PC-3 (cell line): ENCODE measurements at regions of chr5 and their contacts with region 1.

Region 1: DNA sequence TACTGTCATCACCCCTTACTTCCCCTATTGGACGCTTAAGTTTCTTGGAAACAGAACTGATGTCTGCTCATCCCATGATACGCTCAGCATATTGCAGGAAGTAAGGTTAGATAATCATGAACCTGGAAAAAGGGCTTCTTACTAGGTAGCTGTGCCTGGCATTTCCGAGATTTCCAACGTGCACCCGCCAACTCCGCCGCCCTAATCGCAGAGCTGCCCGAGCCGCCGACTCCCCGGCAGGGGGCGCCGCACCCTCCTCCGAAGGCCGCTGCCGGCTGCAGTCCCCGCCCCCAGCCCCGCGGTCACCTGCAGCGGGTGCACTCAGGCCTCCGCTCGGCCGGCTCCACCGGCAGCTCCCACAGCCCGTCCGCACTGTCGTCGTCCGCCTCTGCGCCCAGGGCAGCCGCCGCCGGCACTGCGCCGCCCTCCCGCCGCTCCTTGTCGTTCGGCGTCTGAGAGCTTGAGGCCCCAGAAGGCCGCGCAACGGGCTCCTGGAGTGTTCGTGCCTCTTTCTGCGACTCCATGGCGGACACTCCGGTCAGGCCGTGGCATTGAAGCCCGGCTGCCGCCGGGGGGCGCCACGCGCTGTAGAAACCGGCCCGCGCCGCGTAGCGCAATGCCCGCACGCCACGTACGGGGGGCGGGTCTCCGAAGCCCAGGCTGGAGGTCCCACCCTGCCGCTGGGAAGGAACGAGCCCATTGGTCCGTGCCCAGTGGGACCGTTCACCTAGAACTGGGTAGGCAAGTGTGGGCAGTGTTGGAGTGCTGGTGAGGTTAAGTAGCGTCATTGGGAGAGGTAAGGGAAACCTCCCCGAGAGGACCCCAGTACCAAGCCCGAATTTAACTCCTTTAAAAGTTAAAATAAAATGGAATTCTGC is at the start of gene DTWD2:
- DNase-seq: peak; percentile 94
- ATAC-seq: peak; percentile 96
- H3K4me3 ChIP-seq: peak within 1 kb of the TSS; percentile 82
- H3K27ac ChIP-seq: peak within 1 kb of the TSS; percentile 73
- H3K4me1 ChIP-seq: peaks cover 24% of the 10 kb centered on the region
- H3K27me3 ChIP-seq: no peaks in the 10 kb centered on the region
- CTCF ChIP-seq: peak; percentile 79
- total RNA-seq, gene DTWD2: 16.5 and 24.4 TPM in 2 replicates

Region 2: DNA sequence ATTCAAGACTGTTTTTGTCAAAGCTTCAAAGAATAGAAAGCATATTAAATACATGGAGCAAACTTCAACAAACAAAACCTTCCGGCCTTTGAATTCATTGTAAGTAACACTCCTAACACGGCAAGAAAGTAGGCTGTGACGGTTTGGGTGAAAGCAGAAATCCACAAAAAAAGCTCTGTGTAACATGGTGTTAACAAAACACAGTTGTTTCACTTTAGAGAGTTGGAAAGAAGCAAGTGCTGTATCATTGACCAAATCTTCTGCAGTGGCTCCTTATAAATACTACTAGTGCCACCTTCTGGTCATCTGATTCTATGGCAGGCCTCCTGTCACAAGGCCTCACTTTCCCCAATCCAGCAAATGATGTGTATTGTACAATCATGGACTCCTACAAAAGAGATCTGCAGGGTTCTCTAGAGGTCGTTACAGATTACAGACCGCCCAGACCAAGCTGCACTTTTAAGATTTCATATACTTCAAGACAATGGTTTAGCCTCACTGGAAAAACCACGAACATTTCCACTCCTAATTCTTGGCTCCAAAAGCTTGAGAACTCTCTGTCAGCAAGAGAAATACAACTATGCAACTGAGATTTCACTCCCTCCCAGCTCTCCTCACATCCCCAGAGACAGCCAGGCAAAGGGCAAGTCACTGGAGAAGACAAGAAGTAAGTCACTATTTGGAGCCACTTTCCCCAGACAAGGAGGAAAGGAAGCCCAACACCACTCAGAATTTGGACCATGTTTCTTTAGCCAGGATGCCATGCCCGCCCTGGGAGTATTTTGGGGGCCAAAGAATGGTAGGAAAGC is 196.1 kb before region 1 on chr5:
- CTCF ChIA-PET with region 1: no interaction called
- POLR2A ChIA-PET with region 1: no interaction called
- intact Hi-C with region 1: no loop called
- DNase-seq: peak; percentile 65
- ATAC-seq: peak; percentile 90
- H3K4me3 ChIP-seq: no peak overlapping the region; the same call in 1 of the 2 replicates
- H3K27ac ChIP-seq: no peak overlapping the region
- H3K4me1 ChIP-seq: no peaks in the 10 kb centered on the region
- H3K27me3 ChIP-seq: no peaks in the 10 kb centered on the region
- CTCF ChIP-seq: peak; percentile 72

Region 3: DNA sequence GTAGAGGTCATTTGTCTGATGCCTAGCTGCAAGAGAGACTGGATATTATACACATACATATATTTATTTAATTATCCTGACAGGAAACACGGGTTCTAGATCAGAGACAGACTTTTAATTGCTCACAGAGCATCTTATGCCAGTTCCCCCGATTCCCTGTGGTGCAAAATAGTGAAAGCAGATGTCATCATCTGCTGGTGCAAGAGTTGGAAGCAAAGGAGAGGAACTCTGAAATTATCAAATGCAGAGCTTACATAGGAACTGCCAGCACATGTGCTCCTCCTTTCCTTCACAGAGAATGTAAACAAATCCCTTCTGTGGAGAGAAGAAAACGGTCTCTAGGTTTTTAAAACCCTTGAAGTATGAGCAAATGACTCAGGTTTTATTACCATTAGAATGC is 69.2 kb before region 1 on chr5:
- CTCF ChIA-PET with region 1: no interaction called
- POLR2A ChIA-PET with region 1: no interaction called
- intact Hi-C with region 1: no loop called
- DNase-seq: no peak
- ATAC-seq: no peak
- H3K4me3 ChIP-seq: no peak overlapping the region
- H3K27ac ChIP-seq: no peak overlapping the region
- H3K4me1 ChIP-seq: no peaks in the 10 kb centered on the region
- H3K27me3 ChIP-seq: no peaks in the 10 kb centered on the region
- CTCF ChIP-seq: no peak

Region 4: DNA sequence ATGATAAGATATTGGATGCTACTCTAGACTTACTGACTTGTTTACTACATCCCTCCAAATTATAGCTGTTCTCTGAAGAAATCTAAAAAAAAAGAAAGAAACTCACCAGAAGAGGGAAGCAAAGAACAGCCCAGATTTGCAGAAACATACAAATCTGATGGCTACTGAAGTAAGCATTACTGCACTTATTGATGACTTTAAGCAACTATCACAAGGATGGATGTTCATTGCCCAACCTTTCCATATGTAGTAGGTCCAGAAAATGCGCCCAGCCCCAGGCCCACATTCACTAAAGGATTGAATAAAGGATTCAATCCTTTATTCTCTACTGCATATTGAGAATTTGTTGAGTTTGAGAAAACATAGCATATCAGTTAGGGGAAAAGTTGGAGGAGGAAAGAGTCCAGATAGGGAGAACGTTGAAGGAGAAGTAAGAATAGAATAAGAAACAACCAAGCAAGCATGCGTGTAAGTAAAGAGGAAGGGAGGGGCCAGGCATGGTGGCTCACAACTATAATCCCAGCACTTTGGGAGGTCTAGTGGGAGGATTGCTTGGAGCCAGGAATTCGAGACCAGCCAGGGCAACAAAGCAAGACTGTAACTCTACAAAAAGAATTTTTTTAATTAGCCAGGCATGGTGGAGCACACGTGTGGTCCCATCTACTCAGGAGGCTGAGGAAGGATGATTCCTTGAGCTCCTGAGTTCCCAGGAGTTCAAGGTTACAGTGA is 34.0 kb after region 1 on chr5:
- CTCF ChIA-PET with region 1: interaction called, 3 read pairs
- POLR2A ChIA-PET with region 1: no interaction called
- intact Hi-C with region 1: loop called (anchors 1 kb)
- DNase-seq: peak; percentile 50
- ATAC-seq: peak; percentile 25; the same call in 1 of the 2 replicates
- H3K4me3 ChIP-seq: no peak overlapping the region
- H3K27ac ChIP-seq: no peak overlapping the region
- H3K4me1 ChIP-seq: peaks cover 16% of the 10 kb centered on the region
- H3K27me3 ChIP-seq: no peaks in the 10 kb centered on the region
- CTCF ChIP-seq: peak; percentile 67

Region 5: DNA sequence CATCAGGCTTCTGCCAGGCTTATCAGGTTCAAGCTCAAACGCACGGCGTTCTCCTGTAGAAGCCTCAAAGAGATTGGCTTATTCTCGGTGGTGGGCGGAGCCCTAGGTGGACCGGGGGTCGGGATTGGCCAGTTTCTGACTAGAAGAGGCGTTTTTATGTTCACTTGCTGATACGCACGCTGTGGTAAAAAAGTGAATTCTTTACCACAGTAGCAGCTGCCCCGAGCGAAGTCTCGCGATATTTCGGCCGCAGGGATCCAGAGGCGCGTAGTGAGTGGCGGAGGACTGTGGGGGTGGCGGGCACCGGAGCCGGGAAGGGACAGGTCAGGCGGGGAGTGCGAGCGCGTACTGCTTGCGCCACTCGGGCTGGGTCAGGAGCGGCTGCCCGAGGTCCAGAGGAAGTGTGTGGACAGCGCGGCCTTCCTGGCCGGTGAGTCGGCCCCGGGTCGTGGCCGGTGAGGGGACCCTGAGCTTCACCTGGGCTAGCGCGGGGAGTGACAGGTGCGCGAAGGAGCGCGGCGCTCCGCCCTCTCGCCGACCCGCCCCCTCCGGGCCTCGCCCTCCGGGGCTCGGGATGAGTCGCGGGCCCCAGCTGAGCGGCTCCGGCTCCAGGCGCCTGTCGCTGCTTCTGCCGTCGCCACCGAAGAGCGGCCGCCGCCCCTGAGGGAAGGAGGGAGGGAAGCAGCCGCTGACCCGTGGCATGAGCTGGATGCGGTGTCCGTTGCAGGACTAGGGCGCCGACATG is 82.8 kb after region 1 on chr5 and contains the start of gene DMXL1:
- CTCF ChIA-PET with region 1: interaction called, 5 read pairs
- POLR2A ChIA-PET with region 1: no interaction called
- intact Hi-C with region 1: loop called (anchors 1 kb)
- DNase-seq: peak; percentile 97
- ATAC-seq: peak; percentile 88
- H3K4me3 ChIP-seq: peak within 1 kb of the TSS; percentile 98
- H3K27ac ChIP-seq: peak within 1 kb of the TSS; percentile 77
- H3K4me1 ChIP-seq: peaks cover 11% of the 10 kb centered on the region
- H3K27me3 ChIP-seq: no peaks in the 10 kb centered on the region
- CTCF ChIP-seq: no peak
- total RNA-seq, gene DMXL1: 16.0 and 20.6 TPM in 2 replicates

Region 6: GRCh38 chr5:119088438-119088837 is 100.2 kb after region 1 on chr5:
- CTCF ChIA-PET with region 1: no interaction called
- POLR2A ChIA-PET with region 1: no interaction called
- intact Hi-C with region 1: no loop called
- DNase-seq: no peak
- ATAC-seq: no peak
- H3K4me3 ChIP-seq: no peak overlapping the region
- H3K27ac ChIP-seq: no peak overlapping the region
- H3K4me1 ChIP-seq: no peaks in the 10 kb centered on the region
- H3K27me3 ChIP-seq: no peaks in the 10 kb centered on the region
- CTCF ChIP-seq: no peak

Region 7: DNA sequence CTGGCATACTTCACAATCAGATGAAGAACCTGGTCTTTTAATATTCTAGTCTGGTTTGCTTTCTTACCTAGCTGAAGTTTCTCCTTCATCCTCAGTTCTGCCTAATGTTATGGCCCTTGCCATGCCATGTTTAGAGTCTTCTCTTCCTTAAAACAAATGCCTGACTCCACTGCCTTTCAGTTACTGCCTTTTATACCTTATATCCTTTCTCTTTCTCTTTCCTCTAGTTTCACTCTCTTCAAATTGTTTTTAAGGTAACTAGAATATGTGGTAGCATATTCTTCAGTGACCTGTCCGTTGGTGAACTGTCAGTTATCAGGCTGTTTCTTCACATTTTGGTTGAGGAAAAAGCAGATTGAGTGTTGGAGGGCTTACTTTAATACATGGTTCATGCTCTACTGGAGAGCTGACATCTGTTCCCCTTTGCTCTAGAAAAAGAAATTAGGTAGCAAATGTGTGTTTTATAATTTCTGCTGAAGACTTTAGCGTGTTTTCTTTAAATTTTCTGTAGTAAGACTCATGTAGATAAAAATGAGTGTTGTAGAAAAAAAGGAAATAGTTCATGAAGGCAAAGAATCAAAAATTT is 186.4 kb after region 1 on chr5:
- CTCF ChIA-PET with region 1: no interaction called
- POLR2A ChIA-PET with region 1: no interaction called
- intact Hi-C with region 1: loop called (anchors 2 kb)
- DNase-seq: no peak
- ATAC-seq: no peak
- H3K4me3 ChIP-seq: no peak overlapping the region
- H3K27ac ChIP-seq: no peak overlapping the region
- H3K4me1 ChIP-seq: peaks cover 5% of the 10 kb centered on the region; the same call in 1 of the 2 replicates
- H3K27me3 ChIP-seq: no peaks in the 10 kb centered on the region
- CTCF ChIP-seq: no peak

Region 8: DNA sequence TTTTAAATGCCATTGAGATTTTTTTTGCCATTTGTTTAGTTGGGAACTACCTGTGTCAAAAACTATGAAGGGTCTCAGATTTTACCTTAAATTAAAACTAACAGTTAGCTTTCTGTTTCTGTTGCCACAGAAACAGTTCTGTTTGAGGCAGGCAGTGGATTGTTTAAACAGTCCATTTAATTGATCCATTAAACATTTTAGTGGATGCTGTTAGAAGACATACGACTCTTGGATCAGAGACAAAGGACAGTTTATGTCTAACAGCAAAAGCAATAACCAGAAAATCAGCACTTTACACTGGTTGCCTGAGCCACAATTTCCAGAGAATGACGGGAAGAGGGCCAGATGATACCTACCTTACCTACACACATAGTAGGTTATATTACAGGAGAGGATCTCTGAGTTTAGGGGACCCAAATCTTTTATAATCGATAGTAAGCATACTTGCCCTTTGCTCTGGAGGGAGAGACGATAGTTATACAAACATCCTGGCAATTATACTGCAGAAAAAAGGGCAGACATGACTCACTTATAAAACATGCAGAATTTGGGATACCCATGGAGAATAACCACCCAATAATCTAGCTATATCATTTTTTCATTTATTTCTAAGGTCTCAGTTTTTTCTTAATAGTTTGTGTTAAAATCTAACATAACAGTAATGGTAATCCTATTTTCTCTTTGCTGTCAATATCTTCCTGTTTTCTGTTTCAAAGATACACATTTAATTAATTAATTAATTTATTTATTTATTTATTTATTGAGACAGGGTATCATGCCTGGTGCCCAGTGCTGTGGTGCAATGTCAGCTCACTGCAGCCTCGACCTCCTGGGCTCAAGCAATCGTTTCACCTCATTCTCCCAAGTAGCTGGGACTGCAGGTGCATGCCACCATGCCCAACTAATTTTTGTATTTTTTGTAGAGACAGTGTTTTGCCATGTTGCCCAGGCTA is 230.9 kb after region 1 on chr5:
- CTCF ChIA-PET with region 1: no interaction called
- POLR2A ChIA-PET with region 1: no interaction called
- intact Hi-C with region 1: loop called (anchors 10 kb)
- DNase-seq: peak; percentile 56
- ATAC-seq: peak; percentile 88
- H3K4me3 ChIP-seq: 0 out of 2 replicates have a peak overlapping the region, but pooled peaks have one; percentile 2
- H3K27ac ChIP-seq: no peak overlapping the region
- H3K4me1 ChIP-seq: peaks cover 8% of the 10 kb centered on the region
- H3K27me3 ChIP-seq: no peaks in the 10 kb centered on the region
- CTCF ChIP-seq: no peak

Region 9: DNA sequence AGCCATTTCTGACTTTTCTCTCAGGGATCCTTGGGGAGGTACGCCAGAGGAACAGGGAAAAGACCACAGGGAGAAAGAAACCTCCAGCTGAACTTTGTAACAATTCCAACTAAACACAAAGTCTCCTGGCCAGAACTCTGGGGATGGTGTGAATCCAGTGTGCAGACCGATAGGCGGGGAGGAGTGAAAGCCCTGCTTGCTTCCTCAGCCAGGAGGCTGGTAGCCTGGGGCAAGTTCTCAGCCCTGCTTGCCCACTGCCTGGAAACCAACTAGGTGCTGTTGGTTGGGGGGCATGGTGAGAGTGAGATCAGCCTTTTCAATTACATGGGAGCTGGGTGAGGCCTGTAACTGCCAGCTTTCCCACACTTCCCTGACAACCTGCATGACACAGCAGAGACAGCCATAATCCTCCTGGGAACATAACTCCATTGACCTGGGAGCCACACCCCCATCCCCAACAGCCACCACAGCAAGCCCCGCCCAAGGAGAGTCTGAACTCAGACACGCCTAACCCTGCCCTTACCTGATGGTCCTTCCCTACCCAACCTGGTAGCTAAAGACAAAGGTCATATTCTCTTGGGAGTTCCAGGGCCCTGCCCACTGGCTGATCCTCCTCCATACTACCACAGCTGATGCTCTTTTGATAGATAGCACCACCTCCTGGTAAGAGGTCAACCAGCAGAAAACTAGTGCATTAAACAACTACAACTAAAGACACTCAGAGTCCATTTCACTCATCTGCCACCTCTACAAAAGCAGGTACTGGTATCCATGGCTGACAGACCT is 267.5 kb after region 1 on chr5:
- CTCF ChIA-PET with region 1: no interaction called
- POLR2A ChIA-PET with region 1: interaction called, 4 read pairs
- intact Hi-C with region 1: loop called (anchors 1 kb)
- DNase-seq: peak; percentile 58
- ATAC-seq: peak; percentile 93
- H3K4me3 ChIP-seq: no peak overlapping the region
- H3K27ac ChIP-seq: peak overlapping the region; percentile 59
- H3K4me1 ChIP-seq: no peaks in the 10 kb centered on the region
- H3K27me3 ChIP-seq: no peaks in the 10 kb centered on the region
- CTCF ChIP-seq: peak; percentile 57

Region 10: DNA sequence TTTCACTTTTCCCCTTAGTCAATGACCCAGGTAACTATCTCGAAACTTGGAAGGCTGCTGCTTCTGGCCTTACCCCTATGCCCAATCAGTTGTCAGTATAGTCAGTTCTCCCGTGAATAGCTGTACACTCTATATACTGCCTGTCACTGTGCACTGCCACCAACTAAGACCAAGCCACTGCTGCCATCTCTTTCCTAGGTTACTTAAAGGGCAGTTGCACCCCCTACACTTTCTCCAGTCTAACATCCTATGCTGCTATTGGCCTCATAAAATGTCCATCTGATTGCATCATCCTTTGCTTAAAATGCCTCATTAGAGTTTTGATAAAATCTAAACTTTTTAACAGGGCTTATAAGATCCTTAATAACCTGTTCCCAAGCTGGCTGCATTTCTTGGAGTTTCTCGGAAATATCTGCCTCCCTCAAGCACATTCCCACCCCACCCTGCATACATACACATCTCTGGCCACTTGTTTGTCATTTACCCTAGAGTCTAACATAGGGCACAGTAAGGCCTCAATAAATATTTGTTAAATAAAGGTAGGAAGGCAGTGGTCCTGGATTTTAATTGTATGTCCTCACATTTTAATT is 334.8 kb after region 1 on chr5:
- CTCF ChIA-PET with region 1: no interaction called
- POLR2A ChIA-PET with region 1: no interaction called
- intact Hi-C with region 1: no loop called
- DNase-seq: no peak
- ATAC-seq: no peak
- H3K4me3 ChIP-seq: peak overlapping the region; percentile 46; the same call in 1 of the 2 replicates
- H3K27ac ChIP-seq: peak overlapping the region; percentile 97
- H3K4me1 ChIP-seq: peaks cover 39% of the 10 kb centered on the region
- H3K27me3 ChIP-seq: no peaks in the 10 kb centered on the region
- CTCF ChIP-seq: no peak

Region 11: GRCh38 chr5:119336845-119337580 is 348.8 kb after region 1 on chr5:
- CTCF ChIA-PET with region 1: no interaction called
- POLR2A ChIA-PET with region 1: no interaction called
- intact Hi-C with region 1: loop called (anchors 1 kb)
- DNase-seq: no peak
- ATAC-seq: no peak
- H3K4me3 ChIP-seq: no peak overlapping the region
- H3K27ac ChIP-seq: no peak overlapping the region
- H3K4me1 ChIP-seq: peaks cover 3% of the 10 kb centered on the region; the same call in 1 of the 2 replicates
- H3K27me3 ChIP-seq: no peaks in the 10 kb centered on the region
- CTCF ChIP-seq: no peak